Body of pancreas (tissue), 4 donors: ENCODE measurements at regions of chr1 and their contacts with region 1.

Region 1: DNA sequence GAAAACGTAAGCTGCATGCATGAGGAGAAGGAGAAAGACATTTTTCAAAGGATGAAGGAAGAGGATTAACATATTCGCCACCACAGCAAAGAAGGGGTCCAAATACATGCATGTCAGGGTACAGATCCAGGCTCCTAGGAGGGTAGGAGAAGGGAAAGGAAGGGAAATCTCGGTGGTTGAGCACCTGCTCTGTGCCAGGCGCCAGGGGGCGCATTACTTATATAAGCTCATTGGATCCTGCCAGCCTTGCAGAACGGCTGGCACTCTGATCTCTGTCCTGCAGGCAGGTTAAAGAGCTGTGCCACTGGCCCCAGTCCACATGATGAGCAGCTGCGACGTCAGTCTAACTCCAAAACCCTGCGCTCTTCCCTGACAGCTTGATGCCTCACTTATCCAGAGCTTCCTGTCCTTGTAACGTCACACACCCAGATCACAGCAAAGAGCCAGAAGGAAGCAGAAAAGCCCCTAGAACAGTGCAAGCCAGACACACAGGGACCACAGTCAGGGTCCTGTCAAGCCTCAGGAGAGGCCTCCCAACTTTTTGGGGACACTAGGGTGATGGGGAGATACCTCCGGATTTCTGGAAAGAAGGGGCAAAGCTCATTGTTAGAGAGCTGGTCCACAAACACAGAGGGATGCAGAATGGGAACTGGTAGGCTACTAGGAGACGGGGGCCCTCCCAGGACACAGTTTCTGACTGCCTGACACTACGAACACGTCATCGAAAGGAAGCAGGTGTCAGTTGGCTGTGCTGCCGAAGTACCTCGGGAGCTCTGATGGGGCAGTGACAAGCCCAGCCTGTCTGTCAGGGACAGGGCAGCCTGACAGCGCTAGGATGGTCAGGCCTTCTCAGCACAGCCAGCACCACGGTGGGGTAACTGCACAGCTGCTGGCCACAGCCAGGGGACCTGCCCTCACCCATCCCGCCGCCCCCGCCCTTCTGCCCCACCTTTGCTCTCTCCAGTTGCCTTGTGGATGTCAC is 99.1 kb downstream of the BEND5 start:
- DNase-seq: peak; percentile 59 to 85 (median 78)
- ATAC-seq: peak; percentile 59
- H3K4me3 ChIP-seq: no peak overlapping the region
- H3K27ac ChIP-seq: peak overlapping the region in 2 of 4 donors; percentile 26 to 40
- H3K4me1 ChIP-seq: no peaks in the 10 kb centered on the region
- H3K27me3 ChIP-seq: no peaks in the 10 kb centered on the region
- CTCF ChIP-seq: peak; percentile 40 to 76 (median 56)
- POLR2A ChIP-seq: no peak

Region 2: DNA sequence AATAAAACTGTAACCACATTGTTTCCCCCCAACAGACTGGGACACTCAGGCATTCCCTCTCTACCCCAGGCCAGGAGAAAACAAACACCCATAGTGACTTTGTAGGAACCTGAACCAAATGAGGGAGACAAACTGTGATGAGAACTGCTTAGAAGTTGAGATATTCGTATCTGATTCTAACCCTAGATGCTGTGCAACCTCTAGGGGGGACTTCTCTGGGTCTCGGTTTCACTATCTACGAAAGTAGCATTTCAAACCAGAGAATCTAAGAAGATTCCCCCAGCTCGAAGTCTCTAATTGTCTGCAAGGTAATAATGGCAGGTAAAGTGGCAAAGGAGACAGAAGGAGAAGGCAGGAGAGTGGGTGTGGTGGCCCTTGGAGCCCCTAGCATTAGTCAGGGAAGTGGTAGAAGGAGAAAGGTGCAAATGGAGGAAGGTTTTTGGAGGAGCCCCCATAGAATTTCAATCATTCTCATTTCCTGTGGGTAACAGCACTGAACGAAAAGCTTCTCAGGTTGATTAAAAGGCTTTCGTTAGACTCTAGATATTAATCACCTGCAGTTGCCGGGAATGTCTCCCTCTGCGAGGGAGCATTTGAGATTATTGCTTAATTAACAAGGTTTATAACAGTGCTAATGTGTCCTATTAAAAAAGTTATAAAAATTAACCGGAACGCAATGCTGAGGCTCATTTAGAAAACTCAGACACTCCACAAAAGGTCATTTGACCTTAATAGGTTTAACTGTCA is 52.7 kb after region 1 on chr1:
- intact Hi-C with region 1: no loop called
- DNase-seq: no peak
- ATAC-seq: no peak
- H3K4me3 ChIP-seq: no peak overlapping the region
- H3K27ac ChIP-seq: no peak overlapping the region
- H3K4me1 ChIP-seq: no peaks in the 10 kb centered on the region
- H3K27me3 ChIP-seq: no peaks in the 10 kb centered on the region
- CTCF ChIP-seq: no peak
- POLR2A ChIP-seq: no peak

Region 3: DNA sequence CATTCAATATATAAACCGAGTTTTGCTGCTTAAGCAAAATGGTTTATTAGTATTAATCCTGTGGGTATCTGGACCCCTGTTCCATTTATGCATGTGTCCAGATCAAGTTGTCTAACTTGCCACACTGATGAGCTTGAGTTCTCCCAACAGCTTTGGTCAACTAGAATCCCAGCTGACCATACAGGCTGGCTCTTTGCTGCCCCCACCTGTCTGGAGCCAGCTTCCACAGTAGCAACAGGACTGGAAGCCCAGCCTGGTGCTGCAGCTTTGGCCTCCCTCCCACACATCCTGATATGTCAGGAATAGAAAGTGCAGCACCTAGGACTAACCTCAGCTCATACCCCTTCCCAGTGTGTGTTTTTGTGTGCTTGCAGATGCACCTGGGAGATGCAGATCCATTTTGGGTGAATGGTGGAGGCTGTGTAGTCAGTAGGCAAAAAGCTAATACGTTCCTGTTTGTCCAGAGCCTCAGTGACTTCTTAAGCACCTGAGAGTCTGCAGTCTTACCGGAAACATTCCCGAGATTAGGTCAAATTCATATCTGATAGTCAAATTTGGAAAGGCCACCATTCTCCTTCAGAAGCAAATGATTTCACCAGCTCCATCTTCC is 140.0 kb after region 1 on chr1:
- intact Hi-C with region 1: loop called (anchors 10 kb)
- DNase-seq: peak; percentile 61 to 79 (median 64)
- ATAC-seq: peak; percentile 55
- H3K4me3 ChIP-seq: no peak overlapping the region
- H3K27ac ChIP-seq: no peak overlapping the region
- H3K4me1 ChIP-seq: no peaks in the 10 kb centered on the region
- H3K27me3 ChIP-seq: no peaks in the 10 kb centered on the region
- CTCF ChIP-seq: peak; percentile 60 to 76 (median 65)
- POLR2A ChIP-seq: no peak